Activated CD4-positive, alpha-beta memory T cell treated with anti-CD3 and anti-CD28 coated beads for 36 hours (primary cell): ENCODE measurements at regions of chr5 and their contacts with region 1.

Region 1: GRCh38 chr5:173293817-173294672 is 34.2 kb downstream of the STC2 start:
- DNase-seq: peak; percentile 80
- H3K4me3 Mint-ChIP-seq: no peak overlapping the region
- H3K27ac Mint-ChIP-seq: no peak overlapping the region
- H3K4me1 Mint-ChIP-seq: peaks cover 15% of the 10 kb centered on the region
- H3K27me3 Mint-ChIP-seq: peaks cover 40% of the 10 kb centered on the region

Region 2: DNA sequence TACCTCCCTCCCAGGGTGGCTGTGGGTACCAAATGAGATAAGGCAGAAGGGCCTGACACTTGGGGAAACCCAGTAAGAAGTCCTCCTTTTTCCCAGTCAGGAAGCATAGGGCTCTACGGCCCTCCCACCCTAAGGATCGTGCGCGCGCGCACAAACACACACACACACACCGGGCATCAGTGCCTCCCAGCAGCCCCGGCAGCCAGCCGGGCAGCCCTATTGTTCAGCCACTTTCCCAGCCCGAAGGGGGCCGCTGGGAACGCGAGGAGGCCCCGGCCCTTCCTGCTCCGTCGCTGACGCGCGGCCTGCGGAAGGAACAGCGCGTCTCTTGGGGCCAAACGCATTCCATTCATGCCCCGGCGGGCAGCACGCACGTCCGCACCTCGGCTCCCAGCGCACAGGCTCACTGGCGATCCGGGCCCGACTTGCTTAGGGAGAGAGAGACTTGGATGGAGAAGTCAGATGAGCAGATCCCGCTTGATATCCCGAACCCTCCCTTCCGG is 545.7 kb before region 1 on chr5:
- CTCF ChIA-PET with region 1: no interaction called
- POLR2A ChIA-PET with region 1: no interaction called
- intact Hi-C with region 1: no loop called
- DNase-seq: no peak
- H3K4me3 Mint-ChIP-seq: no peak overlapping the region
- H3K27ac Mint-ChIP-seq: no peak overlapping the region
- H3K4me1 Mint-ChIP-seq: peaks cover 2% of the 10 kb centered on the region
- H3K27me3 Mint-ChIP-seq: peaks cover 3% of the 10 kb centered on the region

Region 3: GRCh38 chr5:173232499-173233346 is 61.3 kb before region 1 on chr5:
- CTCF ChIA-PET with region 1: interaction called, 3 read pairs
- POLR2A ChIA-PET with region 1: no interaction called
- intact Hi-C with region 1: loop called (anchors 5 kb)
- DNase-seq: no peak
- H3K4me3 Mint-ChIP-seq: peak overlapping the region; percentile 29
- H3K27ac Mint-ChIP-seq: no peak overlapping the region
- H3K4me1 Mint-ChIP-seq: peaks cover 46% of the 10 kb centered on the region
- H3K27me3 Mint-ChIP-seq: peaks cover 90% of the 10 kb centered on the region

Region 4: GRCh38 chr5:173331956-173332479 is 38.0 kb after region 1 on chr5:
- CTCF ChIA-PET with region 1: interaction called, 137 read pairs
- POLR2A ChIA-PET with region 1: interaction called, 15 read pairs
- intact Hi-C with region 1: loop called (anchors 1 kb)
- DNase-seq: peak; percentile 91
- H3K4me3 Mint-ChIP-seq: no peak overlapping the region
- H3K27ac Mint-ChIP-seq: no peak overlapping the region
- H3K4me1 Mint-ChIP-seq: peaks cover 22% of the 10 kb centered on the region
- H3K27me3 Mint-ChIP-seq: peaks cover 39% of the 10 kb centered on the region

Region 5: DNA sequence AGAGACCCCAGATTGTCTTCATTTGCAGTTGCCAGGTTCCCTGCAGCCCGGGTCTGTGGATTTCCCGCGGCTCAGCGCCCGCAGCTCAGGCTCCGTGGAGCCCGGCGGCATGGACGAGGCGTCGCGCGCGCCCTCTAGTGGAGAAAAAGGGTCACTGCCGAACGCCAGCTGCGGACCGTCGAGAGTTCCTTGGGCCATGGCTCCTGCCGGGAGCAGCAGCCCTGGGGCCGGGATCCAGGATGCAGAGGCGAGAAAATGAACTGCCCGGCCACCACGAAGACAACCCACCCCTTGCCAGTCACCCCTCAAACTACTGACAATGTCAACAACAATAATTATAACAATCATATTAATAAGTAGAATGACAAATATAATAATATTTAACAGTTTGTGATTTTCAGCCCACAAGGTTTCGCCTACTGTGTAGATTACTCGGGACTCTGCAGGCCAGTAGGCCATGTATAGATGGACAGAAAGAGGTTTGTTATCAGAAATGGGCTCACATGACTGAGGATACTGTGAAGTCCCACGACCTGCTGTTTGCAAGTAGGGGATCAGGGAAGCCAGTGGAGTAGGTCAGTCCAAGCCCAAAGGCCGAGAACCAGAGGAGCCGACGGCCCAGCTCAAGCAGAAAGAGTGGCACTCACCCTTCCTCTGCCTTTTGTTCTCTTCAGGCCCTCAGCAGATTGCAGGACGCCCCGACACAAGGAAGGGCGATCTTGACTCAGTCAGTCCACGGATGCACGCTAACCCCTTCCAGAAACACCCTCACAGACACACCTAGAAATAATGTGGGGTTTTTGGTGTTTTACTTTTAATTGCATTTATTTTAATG is 279.3 kb after region 1 on chr5:
- CTCF ChIA-PET with region 1: interaction called, 25 read pairs
- POLR2A ChIA-PET with region 1: no interaction called
- intact Hi-C with region 1: loop called (anchors 1 kb)
- DNase-seq: peak; percentile 74
- H3K4me3 Mint-ChIP-seq: no peak overlapping the region
- H3K27ac Mint-ChIP-seq: no peak overlapping the region
- H3K4me1 Mint-ChIP-seq: no peaks in the 10 kb centered on the region
- H3K27me3 Mint-ChIP-seq: peaks cover 23% of the 10 kb centered on the region

Region 6: GRCh38 chr5:173833196-173833985 is 539.3 kb after region 1 on chr5:
- CTCF ChIA-PET with region 1: no interaction called
- POLR2A ChIA-PET with region 1: no interaction called
- intact Hi-C with region 1: no loop called
- DNase-seq: no peak
- H3K4me3 Mint-ChIP-seq: no peak overlapping the region
- H3K27ac Mint-ChIP-seq: no peak overlapping the region
- H3K4me1 Mint-ChIP-seq: no peaks in the 10 kb centered on the region
- H3K27me3 Mint-ChIP-seq: no peaks in the 10 kb centered on the region

Region 7: GRCh38 chr5:173972925-173973615 is 679.0 kb after region 1 on chr5:
- CTCF ChIA-PET with region 1: interaction called, 7 read pairs
- POLR2A ChIA-PET with region 1: no interaction called
- intact Hi-C with region 1: loop called (anchors 1 kb)
- DNase-seq: peak; percentile 85
- H3K4me3 Mint-ChIP-seq: peak overlapping the region; percentile 68
- H3K27ac Mint-ChIP-seq: no peak overlapping the region
- H3K4me1 Mint-ChIP-seq: peaks cover 9% of the 10 kb centered on the region
- H3K27me3 Mint-ChIP-seq: peaks cover 4% of the 10 kb centered on the region